ENCODE measurements at regions of chr10 and their contacts with region 1.

Region 1: DNA sequence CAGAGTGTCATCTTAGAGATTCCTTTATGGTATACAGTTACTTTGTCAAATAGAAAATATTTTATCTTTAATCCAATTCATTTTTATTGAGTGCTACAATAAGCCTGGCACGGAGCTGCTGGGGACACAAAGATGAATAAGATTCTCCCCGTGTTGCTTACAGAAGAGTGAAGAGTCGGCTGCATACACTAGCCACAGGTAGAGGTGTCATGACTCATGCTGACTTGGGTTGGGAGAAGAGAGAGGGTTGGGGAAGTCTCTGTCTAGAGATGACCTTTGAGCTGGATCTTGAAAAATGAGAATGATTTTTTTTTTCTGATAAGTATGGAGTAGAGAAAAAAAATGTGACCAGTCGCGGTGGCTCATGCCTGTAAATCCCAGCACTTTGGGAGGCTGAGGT is 289.9 kb upstream of the CELF2 start:
- DNase-seq: no peak
- ATAC-seq: no peak
- H3K4me3 ChIP-seq: no peak overlapping the region
- H3K4me3 Mint-ChIP-seq: no peak overlapping the region
- H3K27ac ChIP-seq: no peak overlapping the region
- H3K27ac Mint-ChIP-seq: no peak overlapping the region
- H3K4me1 ChIP-seq: no peaks in the 10 kb centered on the region
- H3K4me1 Mint-ChIP-seq: no peaks in the 10 kb centered on the region
- H3K27me3 ChIP-seq: peaks cover 0 to 3% of the 10 kb centered on the region in 2 experiments
- H3K27me3 Mint-ChIP-seq: peaks cover 6 to 8% of the 10 kb centered on the region in 2 donors

Region 2: GRCh38 chr10:10353326-10353868 is 374.4 kb before region 1 on chr10:
- CTCF ChIA-PET with region 1: no interaction called
- POLR2A ChIA-PET with region 1: interaction called in 1 of 2 experiments, 12 read pairs
- DNase-seq: no peak
- ATAC-seq: no peak
- H3K4me3 ChIP-seq: no peak overlapping the region
- H3K4me3 Mint-ChIP-seq: no peak overlapping the region
- H3K27ac ChIP-seq: no peak overlapping the region
- H3K27ac Mint-ChIP-seq: no peak overlapping the region
- H3K4me1 ChIP-seq: no peaks in the 10 kb centered on the region
- H3K4me1 Mint-ChIP-seq: no peaks in the 10 kb centered on the region
- H3K27me3 ChIP-seq: no peaks in the 10 kb centered on the region
- H3K27me3 Mint-ChIP-seq: no peaks in the 10 kb centered on the region